ENCODE measurements at regions of chr10 and their contacts with region 1.

Region 1: DNA sequence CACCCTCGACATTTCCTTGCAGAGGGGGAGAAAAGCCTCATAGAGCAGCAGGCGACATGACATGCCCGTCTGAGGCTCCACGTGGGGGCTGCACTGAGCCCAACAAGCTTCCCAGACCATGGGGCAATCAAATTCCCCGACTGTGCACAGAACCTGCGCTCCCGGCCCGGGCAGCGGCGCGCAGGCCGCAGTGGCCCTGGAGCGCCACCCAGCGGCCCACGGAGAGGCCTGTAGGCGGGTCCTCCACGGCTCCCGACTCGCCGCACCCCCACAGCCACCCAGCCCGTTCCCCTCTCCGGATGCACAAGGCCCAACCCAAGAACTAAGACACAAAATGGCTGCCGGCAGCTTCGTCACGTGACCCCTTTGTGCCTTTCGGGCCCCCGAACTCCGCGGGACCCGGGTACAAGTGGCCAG is 816 bp downstream of the EPC1 start:
- DNase-seq: peak; percentile 96 to 98
- H3K4me3 ChIP-seq: peak overlapping the region; percentile 62 to 76
- H3K27ac ChIP-seq: peak overlapping the region; percentile 95 to 99
- H3K4me1 ChIP-seq: peaks cover 0 to 79% (median 37%) of the 10 kb centered on the region in 4 donors
- H3K27me3 ChIP-seq: no peaks in the 10 kb centered on the region
- CTCF ChIP-seq: peak; percentile 96 to 97

Region 2: GRCh38 chr10:32055813-32056600 is 290.1 kb before region 1 on chr10 and contains the start of gene KIF5B:
- intact Hi-C with region 1: loop called (anchors 10 kb)
- DNase-seq: peak; percentile 81 to 92
- H3K4me3 ChIP-seq: peak within 1 kb of the TSS; percentile 81 to 99
- H3K27ac ChIP-seq: peak within 1 kb of the TSS; percentile 97 to 99
- H3K4me1 ChIP-seq: peaks cover 0 to 29% (median 6%) of the 10 kb centered on the region in 4 donors
- H3K27me3 ChIP-seq: no peaks in the 10 kb centered on the region
- CTCF ChIP-seq: no peak

Region 3: DNA sequence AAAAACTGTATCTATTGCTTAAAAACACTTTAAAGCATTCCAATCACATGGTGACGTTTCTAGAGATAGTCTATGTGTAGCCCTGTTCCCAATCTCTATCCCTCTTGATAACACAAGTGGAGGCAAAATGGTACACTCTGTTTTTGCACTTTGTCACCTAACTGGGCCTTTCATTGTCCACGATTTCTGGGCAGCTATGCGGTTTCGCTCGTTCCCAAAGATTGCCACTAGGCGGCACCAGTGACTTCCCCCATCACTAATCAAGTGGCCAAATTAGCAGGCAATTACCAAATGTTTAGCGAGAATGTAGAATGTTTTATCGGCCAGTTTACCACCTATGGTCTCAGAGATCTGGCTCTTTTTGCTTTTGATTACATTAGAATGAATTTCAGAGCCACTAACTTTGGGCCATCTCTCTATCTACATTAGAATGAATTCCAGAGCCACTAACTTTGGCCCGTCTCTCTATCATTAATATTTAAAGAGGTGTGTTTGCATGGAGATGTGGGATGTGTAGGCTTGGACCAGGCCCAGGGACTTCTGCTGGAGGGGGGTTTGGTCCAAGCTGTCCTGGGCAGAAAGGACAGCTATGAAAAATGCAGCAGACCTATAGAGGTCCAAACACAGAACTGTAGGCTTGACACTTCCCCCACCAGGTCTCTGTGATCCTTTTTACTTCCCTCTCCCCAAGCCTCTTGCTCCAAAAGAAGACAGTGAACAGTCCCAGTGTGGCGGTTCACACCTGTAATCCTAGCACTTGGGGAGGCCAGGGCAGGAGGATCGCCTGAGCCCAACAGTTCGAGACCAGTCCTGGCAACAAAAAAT is 89.3 kb before region 1 on chr10:
- intact Hi-C with region 1: loop called (anchors 5 kb)
- DNase-seq: peak; percentile 60 to 76
- H3K4me3 ChIP-seq: no peak overlapping the region
- H3K27ac ChIP-seq: no peak overlapping the region
- H3K4me1 ChIP-seq: no peaks in the 10 kb centered on the region
- H3K27me3 ChIP-seq: no peaks in the 10 kb centered on the region
- CTCF ChIP-seq: peak; percentile 84 to 86

Region 4: DNA sequence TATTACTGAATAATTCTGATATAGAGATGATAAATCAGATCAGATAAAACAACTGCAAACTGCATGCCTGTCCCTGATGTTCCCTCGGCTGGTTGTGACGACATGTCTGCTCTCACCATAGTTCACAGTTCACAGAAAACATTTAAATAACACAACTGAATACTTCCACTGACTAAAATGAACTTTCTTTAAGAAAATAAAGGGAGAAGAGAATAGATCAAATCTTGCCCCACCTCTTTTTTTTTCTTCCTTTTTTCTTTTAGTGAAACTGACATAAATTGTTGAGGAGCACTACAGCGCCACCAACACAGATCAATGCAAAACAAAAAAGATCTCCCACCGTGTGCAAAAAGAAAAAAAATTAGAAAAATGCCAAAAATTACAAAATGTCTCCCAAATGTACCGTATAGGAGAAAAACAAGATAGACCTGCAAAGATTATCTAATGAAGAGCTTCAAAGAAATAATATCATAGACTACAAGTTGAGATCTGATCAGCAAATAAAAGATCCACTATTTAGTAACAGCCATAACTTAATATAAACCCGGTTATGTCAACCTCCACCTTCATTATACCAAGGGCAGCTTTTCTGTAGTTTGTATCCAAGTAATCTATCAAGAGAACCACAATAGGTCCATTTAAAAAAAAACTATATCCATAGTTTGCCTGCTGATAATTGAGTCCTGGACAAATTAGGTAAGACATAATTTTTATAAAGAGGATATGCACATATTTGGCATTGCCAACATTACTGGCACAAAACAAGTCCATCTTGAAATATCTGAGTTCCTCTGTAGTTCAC is 31.5 kb after region 1 on chr10:
- intact Hi-C with region 1: loop called (anchors 2 kb)
- DNase-seq: no peak
- H3K4me3 ChIP-seq: peak overlapping the region; percentile 65 to 82
- H3K27ac ChIP-seq: peak overlapping the region; percentile 79 to 84
- H3K4me1 ChIP-seq: peaks cover 0 to 43% (median 6%) of the 10 kb centered on the region in 4 donors
- H3K27me3 ChIP-seq: no peaks in the 10 kb centered on the region
- CTCF ChIP-seq: peak in 1 of 2 experiments; percentile 15